Mammary epithelial cell (primary cell): ENCODE measurements at regions of chr11 and their contacts with region 1.

Region 1: GRCh38 chr11:125062931-125063428 is at the start of gene SLC37A2:
- DNase-seq: peak; percentile 81
- H3K4me3 ChIP-seq: peak within 1 kb of the TSS; percentile 59 to 75 (median 63)
- H3K27ac ChIP-seq: peak within 1 kb of the TSS; percentile 69
- H3K4me1 ChIP-seq: peaks cover 8% of the 10 kb centered on the region
- H3K27me3 ChIP-seq: no peaks in the 10 kb centered on the region
- CTCF ChIP-seq: peak in 1 of 2 donors; percentile 19
- total RNA-seq, gene SLC37A2: 34.8 to 85.5 TPM

Region 2: DNA sequence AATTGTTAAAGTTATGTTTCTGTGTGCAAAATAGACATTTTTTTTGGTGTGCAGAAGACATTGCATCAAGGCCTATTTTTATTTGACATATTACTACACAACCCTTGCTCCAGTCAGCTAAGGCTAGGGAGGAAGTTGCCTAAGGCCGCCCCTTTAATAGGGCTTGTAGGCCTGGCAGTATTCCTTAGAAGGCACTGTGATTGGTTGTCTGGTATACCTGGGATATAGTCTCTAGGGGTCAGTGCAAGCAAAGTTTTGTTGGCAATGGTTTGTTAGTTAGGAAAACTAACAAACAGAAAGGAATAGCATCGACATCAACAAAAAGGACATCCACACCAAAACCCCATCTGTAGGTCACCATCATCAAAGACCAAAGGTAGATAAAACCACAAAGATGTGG is 92.1 kb before region 1 on chr11:
- CTCF ChIA-PET with region 1: no interaction called
- dilution Hi-C with region 1: no loop called
- in situ Hi-C with region 1: no loop called
- intact Hi-C with region 1: loop called (anchors 5 kb)
- DNase-seq: peak; percentile 46
- H3K4me3 ChIP-seq: no peak overlapping the region
- H3K27ac ChIP-seq: no peak overlapping the region
- H3K4me1 ChIP-seq: no peaks in the 10 kb centered on the region
- H3K27me3 ChIP-seq: no peaks in the 10 kb centered on the region
- CTCF ChIP-seq: peak; percentile 10 to 49

Region 3: GRCh38 chr11:125082611-125083311 is 19.8 kb after region 1 on chr11:
- CTCF ChIA-PET with region 1: no interaction called
- dilution Hi-C with region 1: no loop called
- in situ Hi-C with region 1: no loop called
- intact Hi-C with region 1: loop called (anchors 2 kb)
- DNase-seq: peak; percentile 97
- H3K4me3 ChIP-seq: peak overlapping the region in 2 of 3 experiments; percentile 19 to 32
- H3K27ac ChIP-seq: peak overlapping the region; percentile 87
- H3K4me1 ChIP-seq: peaks cover 23% of the 10 kb centered on the region
- H3K27me3 ChIP-seq: no peaks in the 10 kb centered on the region
- CTCF ChIP-seq: peak in 1 of 2 donors; percentile 8

Region 4: DNA sequence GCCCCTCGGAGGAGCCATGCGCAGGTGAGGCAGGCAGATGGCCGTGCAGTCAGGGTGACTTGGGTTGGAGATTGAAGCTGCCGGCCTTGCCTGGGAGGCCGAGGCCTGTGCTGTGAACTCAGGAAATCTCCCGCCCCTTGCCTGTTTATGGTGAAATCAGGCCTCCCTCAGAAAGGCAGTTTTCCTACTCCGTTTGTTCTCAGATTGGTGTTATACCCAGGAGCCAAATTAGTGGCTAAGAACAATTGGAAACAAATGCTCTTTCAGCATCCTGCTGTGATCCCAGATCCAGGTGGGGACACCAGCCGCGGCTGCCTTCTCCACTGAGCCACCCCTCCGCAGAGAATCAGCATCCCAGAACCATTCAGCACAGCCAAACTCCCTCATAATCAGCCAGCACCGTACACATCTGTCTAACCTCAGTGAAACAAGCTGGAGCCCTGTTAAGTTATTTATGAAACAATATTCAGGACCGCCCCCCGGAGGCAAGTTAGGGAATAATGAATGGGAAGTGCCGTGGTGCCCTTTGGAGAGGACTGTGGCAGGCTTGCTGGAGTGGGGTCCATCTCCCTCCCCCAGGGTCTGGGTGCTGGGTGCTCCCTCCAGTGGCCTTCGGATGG is 161.5 kb after region 1 on chr11:
- CTCF ChIA-PET with region 1: no interaction called
- dilution Hi-C with region 1: no loop called
- in situ Hi-C with region 1: no loop called
- intact Hi-C with region 1: no loop called
- DNase-seq: peak; percentile 4
- H3K4me3 ChIP-seq: no peak overlapping the region
- H3K27ac ChIP-seq: no peak overlapping the region
- H3K4me1 ChIP-seq: no peaks in the 10 kb centered on the region
- H3K27me3 ChIP-seq: no peaks in the 10 kb centered on the region
- CTCF ChIP-seq: peak; percentile 24 to 38